ENCODE measurements at regions of chr18 and their contacts with region 1.

Region 1: DNA sequence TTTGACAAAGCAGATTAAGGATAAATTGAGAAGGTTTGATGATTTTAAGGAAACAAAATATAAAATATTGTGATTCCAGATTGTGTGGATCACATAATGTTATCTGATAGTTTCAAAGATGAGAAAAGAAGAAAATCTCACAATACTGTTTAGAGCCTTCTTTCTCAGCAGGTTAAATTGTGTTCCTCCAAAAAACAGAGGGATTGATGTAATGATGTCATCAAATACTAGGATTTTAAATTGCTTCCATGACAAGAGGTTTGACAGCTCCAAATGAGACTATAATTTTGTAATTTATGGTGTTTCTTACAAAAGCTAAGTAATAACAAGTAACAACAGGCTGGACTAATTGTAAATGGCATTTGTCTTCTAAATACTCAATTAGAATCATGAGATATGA is 699.5 kb upstream of the SETBP1 start:
- DNase-seq: no peak
- H3K4me3 ChIP-seq: no peak overlapping the region
- H3K27ac ChIP-seq: no peak overlapping the region
- H3K4me1 ChIP-seq: no peaks in the 10 kb centered on the region
- H3K27me3 ChIP-seq: no peaks in the 10 kb centered on the region
- CTCF ChIP-seq: no peak
- POLR2A ChIP-seq: no peak

Region 2: DNA sequence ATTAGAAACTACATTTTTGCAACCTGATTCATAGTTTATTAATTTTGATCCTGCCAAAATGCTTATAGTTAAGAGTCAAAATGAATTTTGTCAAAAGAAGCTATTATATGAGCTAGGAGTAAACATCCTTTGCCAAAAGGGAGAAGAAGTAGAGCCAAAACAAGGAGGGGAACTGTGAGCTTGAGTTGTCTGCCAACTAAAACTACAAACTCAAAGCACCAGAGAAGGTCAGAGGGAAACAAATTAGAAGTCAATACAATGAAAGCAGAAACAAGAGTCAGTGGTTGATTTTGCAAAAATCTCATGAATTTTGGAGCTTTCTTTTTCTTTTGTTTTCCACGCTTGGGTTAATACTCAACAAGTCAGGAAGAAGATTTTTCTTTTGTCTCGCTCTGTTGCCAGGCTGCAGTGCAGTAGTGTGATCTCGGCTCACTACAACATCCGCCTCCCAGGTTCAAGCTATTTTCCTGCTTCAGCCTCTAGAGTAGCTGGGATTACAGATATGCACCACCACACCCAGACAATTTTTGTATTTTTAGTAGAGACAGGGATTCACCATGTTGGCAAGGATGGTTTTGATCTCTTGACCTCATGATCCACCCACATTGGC is 1374.2 kb before region 1 on chr18:
- intact Hi-C with region 1: no loop called
- DNase-seq: no peak
- H3K4me3 ChIP-seq: no peak overlapping the region
- H3K27ac ChIP-seq: no peak overlapping the region
- H3K4me1 ChIP-seq: no peaks in the 10 kb centered on the region
- H3K27me3 ChIP-seq: no peaks in the 10 kb centered on the region
- CTCF ChIP-seq: no peak
- POLR2A ChIP-seq: no peak

Region 3: DNA sequence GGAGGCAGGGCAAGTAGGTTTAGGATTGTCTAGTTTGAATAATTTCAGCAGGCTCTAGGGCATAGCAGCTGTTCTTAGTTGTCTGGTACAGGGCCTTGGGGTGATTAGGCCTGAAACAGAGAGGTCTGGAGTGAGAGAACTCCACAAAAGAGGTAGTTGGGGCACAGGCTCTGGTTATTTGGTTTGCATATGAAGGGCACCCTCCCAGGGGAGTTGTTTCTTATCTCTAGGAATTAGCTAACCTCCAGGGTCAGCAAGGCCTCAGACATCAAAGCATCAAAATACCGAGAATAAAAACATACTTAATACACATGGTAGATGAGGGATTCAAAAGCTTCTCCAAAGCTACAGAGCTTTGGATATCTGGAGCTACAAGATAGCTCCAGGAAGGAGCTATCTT is 1595.7 kb after region 1 on chr18:
- intact Hi-C with region 1: loop called (anchors 5 kb)
- DNase-seq: no peak
- H3K4me3 ChIP-seq: no peak overlapping the region
- H3K27ac ChIP-seq: no peak overlapping the region
- H3K4me1 ChIP-seq: no peaks in the 10 kb centered on the region
- H3K27me3 ChIP-seq: no peaks in the 10 kb centered on the region
- CTCF ChIP-seq: no peak
- POLR2A ChIP-seq: no peak

Measured in breast epithelium (tissue), 4 donors.